ENCODE measurements at regions of chr2 and their contacts with region 1.

Region 1: DNA sequence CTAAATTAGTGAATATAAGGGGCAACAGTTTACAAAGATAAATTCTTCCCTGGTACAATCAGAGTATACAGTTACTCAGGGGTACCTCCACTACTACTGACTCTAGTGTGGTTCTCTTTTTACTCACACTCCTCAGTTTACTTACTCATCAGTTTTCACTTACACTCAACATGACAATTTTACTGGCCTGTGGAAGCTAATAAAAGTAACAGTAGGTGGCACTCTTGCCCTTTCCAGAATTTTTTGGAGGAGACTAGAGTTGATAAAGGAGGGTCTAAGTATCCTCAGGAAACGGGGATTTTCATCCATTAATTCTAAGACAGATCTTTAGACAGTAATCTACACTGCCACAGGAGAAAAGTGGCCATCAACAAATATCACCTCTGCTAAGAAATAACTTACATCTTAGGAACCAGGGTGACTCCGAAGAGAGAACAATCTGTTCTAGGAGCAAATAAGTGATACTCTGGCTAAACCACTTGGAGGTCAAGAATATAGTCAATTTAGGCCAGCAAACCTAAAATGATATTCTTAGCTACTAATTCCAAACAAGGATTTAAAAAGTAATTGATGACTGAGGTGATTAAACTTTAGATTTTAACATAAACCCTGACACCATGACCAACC is 61.3 kb downstream of the ATL2 start:
- DNase-seq: no peak
- H3K4me3 ChIP-seq: no peak overlapping the region
- H3K27ac ChIP-seq: no peak overlapping the region
- H3K4me1 ChIP-seq: no peaks in the 10 kb centered on the region
- H3K27me3 ChIP-seq: no peaks in the 10 kb centered on the region
- CTCF ChIP-seq: peak; percentile 82

Region 2: DNA sequence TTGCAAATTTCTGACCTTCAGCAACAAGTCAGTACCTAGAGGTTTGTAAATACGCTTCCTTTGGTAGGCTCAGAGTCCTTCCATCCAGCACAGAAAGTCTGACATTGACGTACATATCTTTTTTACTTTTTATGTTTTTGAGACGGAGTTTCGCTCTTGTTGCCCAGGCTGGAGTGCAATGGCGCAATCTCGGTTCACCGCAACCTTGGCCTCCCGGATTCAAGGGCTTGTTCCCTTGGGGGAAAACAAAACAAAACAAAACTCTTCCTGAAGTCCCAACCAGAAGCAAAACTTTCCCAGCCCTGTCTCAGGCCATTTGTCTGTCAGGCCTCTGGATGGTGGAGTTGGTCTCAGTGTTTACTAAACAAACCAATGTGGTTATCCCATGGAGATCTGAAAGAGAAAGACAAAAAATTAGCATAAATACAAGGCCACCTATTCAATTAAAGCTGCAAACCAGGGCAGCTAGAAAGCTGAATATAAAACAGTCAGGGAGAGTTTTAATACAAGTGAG is 90.8 kb after region 1 on chr2:
- intact Hi-C with region 1: no loop called
- DNase-seq: peak; percentile 32
- H3K4me3 ChIP-seq: no peak overlapping the region
- H3K27ac ChIP-seq: peak overlapping the region; percentile 72
- H3K4me1 ChIP-seq: peaks cover 37% of the 10 kb centered on the region
- H3K27me3 ChIP-seq: no peaks in the 10 kb centered on the region
- CTCF ChIP-seq: no peak

Region 3: DNA sequence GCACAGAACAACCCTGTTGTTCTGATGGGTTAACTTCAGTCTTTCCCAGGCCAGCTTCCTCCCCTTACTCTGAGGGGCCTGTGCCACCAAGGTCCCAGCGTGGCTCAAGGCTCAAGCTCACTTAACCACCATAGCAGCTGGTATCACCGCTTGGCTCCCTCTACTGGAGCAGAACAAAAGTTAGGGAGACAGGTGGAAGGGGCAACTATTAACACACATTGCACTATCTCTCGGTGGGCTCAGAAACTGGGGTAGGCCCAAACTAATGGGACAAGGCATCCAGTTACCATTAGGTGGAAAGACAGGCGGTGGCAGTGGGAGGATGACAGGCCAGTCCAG is 149.9 kb after region 1 on chr2:
- intact Hi-C with region 1: loop called (anchors 10 kb)
- DNase-seq: no peak
- H3K4me3 ChIP-seq: no peak overlapping the region
- H3K27ac ChIP-seq: no peak overlapping the region
- H3K4me1 ChIP-seq: no peaks in the 10 kb centered on the region
- H3K27me3 ChIP-seq: no peaks in the 10 kb centered on the region
- CTCF ChIP-seq: peak; percentile 56

Region 4: DNA sequence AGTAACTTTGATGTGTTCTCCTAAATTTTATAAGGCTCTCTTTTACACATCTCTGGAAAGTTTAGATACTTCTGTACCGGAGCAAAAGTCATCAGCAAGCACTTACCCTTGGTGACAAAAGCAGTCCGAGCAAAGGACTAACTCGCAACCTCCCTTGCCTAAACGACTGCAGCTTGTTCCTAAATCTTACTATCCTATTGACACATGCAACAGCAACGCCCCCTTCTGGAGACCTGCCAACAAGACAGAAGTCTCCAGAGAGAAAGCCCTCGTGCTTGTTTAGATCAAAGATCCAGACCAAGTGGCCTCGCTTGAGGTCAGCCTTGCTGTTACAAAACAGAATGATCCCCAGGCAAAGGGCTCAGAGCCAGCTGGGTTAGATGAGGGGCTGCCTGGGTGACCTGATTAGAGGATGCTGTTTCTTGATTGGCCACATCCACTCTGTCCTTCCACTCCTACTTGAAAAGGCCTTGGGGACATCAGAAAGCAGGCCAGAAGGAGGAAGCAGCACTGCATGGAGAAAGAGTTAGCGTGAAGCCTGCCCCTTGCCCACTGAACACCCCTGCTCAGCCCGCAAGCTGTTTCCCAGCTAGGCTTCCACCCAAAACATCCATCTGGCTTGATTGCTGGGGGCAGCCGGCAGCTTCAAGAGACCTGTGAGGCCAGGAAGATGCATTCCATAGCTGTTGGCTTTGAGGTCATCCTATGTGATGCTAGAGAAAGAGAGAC is 192.7 kb after region 1 on chr2:
- intact Hi-C with region 1: loop called (anchors 10 kb)
- DNase-seq: peak; percentile 87
- H3K4me3 ChIP-seq: no peak overlapping the region
- H3K27ac ChIP-seq: peak overlapping the region; percentile 41
- H3K4me1 ChIP-seq: peaks cover 18% of the 10 kb centered on the region
- H3K27me3 ChIP-seq: no peaks in the 10 kb centered on the region
- CTCF ChIP-seq: peak; percentile 52

Region 5: DNA sequence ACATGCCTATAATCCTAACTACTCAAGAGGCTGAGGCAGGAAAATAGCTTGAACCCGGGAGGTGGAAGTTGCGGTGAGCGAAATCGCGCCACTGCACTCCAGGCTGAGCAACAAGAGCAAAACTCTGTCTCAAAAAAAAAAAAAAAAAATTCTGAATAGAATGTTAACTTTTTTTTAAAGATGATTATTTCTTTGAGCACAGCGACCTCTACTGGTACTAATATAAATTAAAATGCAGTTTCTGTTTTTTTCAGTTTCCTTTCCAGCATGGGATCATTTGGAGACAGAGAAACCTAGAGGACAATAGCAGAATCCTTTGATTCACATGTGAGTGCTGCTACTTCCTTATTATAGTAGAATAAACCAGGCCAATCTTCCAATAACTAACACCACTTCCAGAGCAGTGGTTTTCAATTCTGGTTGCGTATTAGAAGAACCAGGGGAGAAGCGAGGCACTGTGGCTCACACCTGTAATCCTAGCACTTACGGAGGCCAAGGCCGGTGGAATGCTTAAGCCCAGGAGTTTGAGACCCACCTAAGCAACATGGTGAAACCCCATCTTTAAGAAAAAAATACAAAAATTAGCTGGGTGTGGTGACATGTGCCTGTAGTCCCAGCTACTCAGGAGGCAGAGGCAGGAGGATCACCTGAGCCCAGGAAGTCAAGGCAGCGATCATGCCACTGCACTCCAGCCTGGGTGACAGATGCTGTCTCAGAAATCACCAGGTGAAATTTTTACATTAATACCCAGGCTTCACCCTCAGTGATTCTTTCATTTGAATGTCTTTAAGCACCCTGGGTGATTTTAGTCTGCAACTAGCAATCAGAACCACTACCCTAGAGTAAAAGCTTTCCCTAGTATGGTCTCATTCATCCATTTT is 425.3 kb after region 1 on chr2:
- intact Hi-C with region 1: loop called (anchors 5 kb)
- DNase-seq: no peak
- H3K4me3 ChIP-seq: peak overlapping the region; percentile 6
- H3K27ac ChIP-seq: peak overlapping the region; percentile 38
- H3K4me1 ChIP-seq: peaks cover 57% of the 10 kb centered on the region
- H3K27me3 ChIP-seq: no peaks in the 10 kb centered on the region
- CTCF ChIP-seq: peak; percentile 72